CD8-positive, alpha-beta T cell (primary cell): ENCODE measurements at regions of chr17 and their contacts with region 1.

Region 1: DNA sequence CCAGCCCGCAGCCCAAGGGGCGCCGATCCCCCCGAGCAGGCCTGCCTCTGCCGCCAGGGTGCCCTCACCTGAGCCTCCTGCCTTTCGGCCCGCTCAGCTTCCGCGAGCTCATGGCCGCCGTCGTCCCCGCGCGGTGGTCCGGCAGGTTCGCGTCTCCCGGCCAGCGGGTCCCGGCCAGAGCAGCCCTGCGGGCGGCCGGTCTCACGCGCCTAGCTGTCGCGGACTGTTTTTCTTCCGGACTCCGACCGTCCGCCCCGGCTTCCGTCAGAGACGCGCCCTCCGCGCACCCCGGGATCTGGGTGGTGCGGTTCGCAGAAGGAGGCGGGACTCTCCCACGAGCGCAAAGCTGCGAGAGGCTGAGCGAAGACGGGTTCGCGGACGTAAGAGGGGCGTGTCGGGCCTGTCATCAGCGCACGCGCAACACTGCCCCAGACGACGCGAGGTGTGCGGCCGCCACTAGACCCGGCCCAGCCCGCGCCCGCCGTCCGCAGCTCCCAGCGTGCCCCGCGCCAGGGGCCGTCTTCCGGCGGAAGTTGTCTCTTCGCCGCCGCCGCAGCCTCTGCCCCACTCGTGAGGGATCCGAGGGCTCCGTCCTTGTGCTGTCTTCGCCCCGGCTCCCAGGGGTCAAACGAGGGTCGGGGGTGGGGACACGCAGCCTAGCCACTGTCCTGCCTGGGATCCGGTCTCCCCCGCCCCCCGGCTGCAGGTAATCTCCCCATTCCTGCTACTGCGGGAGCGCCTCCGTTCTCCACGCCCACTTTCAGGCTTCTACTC is at the start of gene INPP5K:
- DNase-seq: peak; percentile 95 to 100 (median 98)
- ATAC-seq: peak; percentile 91
- H3K4me3 ChIP-seq: peak within 1 kb of the TSS; percentile 93 to 99
- H3K4me3 Mint-ChIP-seq: peak within 1 kb of the TSS; percentile 90
- H3K27ac ChIP-seq: peak within 1 kb of the TSS; percentile 86 to 93
- H3K27ac Mint-ChIP-seq: peak within 1 kb of the TSS; percentile 91
- H3K4me1 ChIP-seq: peaks cover 20% of the 10 kb centered on the region
- H3K4me1 Mint-ChIP-seq: peaks cover 24% of the 10 kb centered on the region
- H3K27me3 ChIP-seq: no peaks in the 10 kb centered on the region
- H3K27me3 Mint-ChIP-seq: no peaks in the 10 kb centered on the region
- CTCF ChIP-seq: no peak
- total RNA-seq, gene INPP5K: 204 to 221 TPM

Region 2: GRCh38 chr17:1179818-1180742 is 336.5 kb before region 1 on chr17 and contains the start of gene ABR:
- CTCF ChIA-PET with region 1: no interaction called
- POLR2A ChIA-PET with region 1: no interaction called
- intact Hi-C with region 1: loop called in 1 of 2 experiments (anchors 2 kb)
- DNase-seq: peak; percentile 25 to 78 (median 70)
- ATAC-seq: peak; percentile 78
- H3K4me3 ChIP-seq: peak within 1 kb of the TSS; percentile 57 to 77
- H3K4me3 Mint-ChIP-seq: peak within 1 kb of the TSS; percentile 78
- H3K27ac ChIP-seq: peak within 1 kb of the TSS in 1 of 2 experiments; percentile 35
- H3K27ac Mint-ChIP-seq: peak within 1 kb of the TSS; percentile 22
- H3K4me1 ChIP-seq: peaks cover 18% of the 10 kb centered on the region
- H3K4me1 Mint-ChIP-seq: peaks cover 18% of the 10 kb centered on the region
- H3K27me3 ChIP-seq: no peaks in the 10 kb centered on the region
- H3K27me3 Mint-ChIP-seq: no peaks in the 10 kb centered on the region
- CTCF ChIP-seq: no peak
- total RNA-seq, gene ABR: 46.4 to 48.7 TPM

Region 3: DNA sequence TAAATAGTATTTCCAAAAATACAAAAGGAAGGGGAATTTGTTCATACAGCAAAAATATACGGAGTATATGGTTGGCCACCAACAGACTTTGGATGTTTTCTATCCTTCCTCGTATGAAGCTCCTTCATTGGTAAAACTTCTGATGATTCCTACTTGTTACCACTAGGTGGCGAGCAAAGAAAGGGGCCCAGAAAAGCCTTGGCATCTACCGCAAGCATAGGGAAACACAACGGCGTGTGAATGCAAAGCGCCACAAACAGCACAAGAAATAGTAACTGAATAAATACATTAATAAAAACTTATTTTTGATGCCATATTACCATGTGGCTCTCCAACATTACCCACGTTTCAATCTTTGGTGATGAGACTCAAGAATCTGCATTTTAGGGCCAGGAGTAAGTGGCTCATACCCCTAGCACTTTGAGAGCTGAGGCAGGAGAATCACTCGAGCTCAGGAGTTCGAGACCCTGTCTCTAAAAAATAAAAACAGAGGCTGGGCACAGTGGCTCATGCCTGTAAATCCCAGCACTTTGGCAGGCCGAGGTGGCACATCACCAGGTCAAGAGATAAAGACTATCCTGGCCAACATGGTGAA is 151.0 kb before region 1 on chr17:
- CTCF ChIA-PET with region 1: interaction called, 63 read pairs
- POLR2A ChIA-PET with region 1: interaction called, 23 read pairs
- intact Hi-C with region 1: loop called (anchors 1 kb)
- DNase-seq: peak; percentile 10 to 88 (median 58)
- ATAC-seq: peak; percentile 76
- H3K4me3 ChIP-seq: no peak overlapping the region
- H3K4me3 Mint-ChIP-seq: no peak overlapping the region
- H3K27ac ChIP-seq: peak overlapping the region in 1 of 2 experiments; percentile 61
- H3K27ac Mint-ChIP-seq: no peak overlapping the region
- H3K4me1 ChIP-seq: peaks cover 34% of the 10 kb centered on the region
- H3K4me1 Mint-ChIP-seq: peaks cover 62% of the 10 kb centered on the region
- H3K27me3 ChIP-seq: no peaks in the 10 kb centered on the region
- H3K27me3 Mint-ChIP-seq: no peaks in the 10 kb centered on the region
- CTCF ChIP-seq: peak; percentile 90

Region 4: GRCh38 chr17:1488030-1488863 is 28.3 kb before region 1 on chr17:
- CTCF ChIA-PET with region 1: interaction called, 6 read pairs
- POLR2A ChIA-PET with region 1: interaction called, 16 read pairs
- intact Hi-C with region 1: loop called (anchors 1 kb)
- DNase-seq: peak in 8 of 9 experiments; percentile 62 to 87 (median 77)
- ATAC-seq: peak; percentile 42
- H3K4me3 ChIP-seq: peak overlapping the region; percentile 53 to 63
- H3K4me3 Mint-ChIP-seq: peak overlapping the region; percentile 86
- H3K27ac ChIP-seq: no peak overlapping the region
- H3K27ac Mint-ChIP-seq: peak overlapping the region; percentile 52
- H3K4me1 ChIP-seq: peaks cover 38% of the 10 kb centered on the region
- H3K4me1 Mint-ChIP-seq: peaks cover 27% of the 10 kb centered on the region
- H3K27me3 ChIP-seq: peaks cover 0 to 3% of the 10 kb centered on the region in 2 experiments
- H3K27me3 Mint-ChIP-seq: no peaks in the 10 kb centered on the region
- CTCF ChIP-seq: no peak

Region 5: DNA sequence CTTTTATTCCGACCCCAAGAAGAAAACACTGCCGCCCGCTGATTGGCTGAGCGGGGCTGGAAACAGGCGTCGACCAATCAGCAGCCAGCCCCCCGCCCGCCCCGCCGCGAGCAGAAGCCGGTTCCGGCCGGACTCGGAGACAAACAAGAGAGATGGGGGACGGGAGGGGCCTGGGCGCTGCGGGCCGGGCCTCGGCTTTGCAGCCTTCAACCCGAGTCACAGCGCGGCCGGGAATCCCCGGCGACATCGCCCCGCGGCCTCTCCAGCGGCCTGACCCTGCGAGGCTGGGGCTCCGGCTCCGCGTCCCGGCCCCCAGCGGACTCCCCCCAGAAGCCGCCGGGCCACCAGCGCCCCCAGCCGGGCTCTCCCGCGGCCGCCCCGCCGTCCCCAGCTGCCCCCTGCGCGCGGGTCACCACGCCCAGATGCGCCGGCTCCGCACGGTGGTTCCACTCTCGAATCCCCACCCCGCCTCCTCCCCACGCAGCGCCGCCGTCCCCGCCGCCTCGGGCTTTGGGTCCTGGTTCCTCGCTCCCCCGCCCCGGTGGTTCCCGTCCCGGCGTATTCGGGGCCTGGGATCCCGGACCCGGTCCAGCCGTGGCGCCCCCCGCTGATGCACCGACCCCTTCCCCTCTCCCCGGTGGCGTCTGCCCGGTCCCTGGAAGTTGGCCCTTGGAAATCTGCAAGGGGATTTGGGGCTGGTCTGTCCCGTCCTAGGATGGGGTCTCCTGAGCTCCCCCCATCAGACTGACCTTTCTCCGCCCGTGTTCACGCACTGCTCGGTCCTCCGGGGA is 112.5 kb after region 1 on chr17:
- CTCF ChIA-PET with region 1: interaction called, 4 read pairs
- POLR2A ChIA-PET with region 1: interaction called, 13 read pairs
- intact Hi-C with region 1: loop called (anchors 1 to 2 kb)
- DNase-seq: peak; percentile 81 to 95 (median 91)
- ATAC-seq: peak; percentile 70
- H3K4me3 ChIP-seq: peak overlapping the region; percentile 70 to 90
- H3K4me3 Mint-ChIP-seq: peak overlapping the region; percentile 95
- H3K27ac ChIP-seq: peak overlapping the region; percentile 43 to 79
- H3K27ac Mint-ChIP-seq: peak overlapping the region; percentile 90
- H3K4me1 ChIP-seq: peaks cover 20% of the 10 kb centered on the region
- H3K4me1 Mint-ChIP-seq: peaks cover 19% of the 10 kb centered on the region
- H3K27me3 ChIP-seq: no peaks in the 10 kb centered on the region
- H3K27me3 Mint-ChIP-seq: no peaks in the 10 kb centered on the region
- CTCF ChIP-seq: no peak

Region 6: GRCh38 chr17:1724506-1725362 is 208.2 kb after region 1 on chr17 and contains the start of gene WDR81:
- CTCF ChIA-PET with region 1: no interaction called
- POLR2A ChIA-PET with region 1: no interaction called
- intact Hi-C with region 1: loop called in 1 of 2 experiments (anchors 1 kb)
- DNase-seq: peak; percentile 57 to 94 (median 86)
- ATAC-seq: peak; percentile 71
- H3K4me3 ChIP-seq: peak within 1 kb of the TSS; percentile 57 to 62
- H3K4me3 Mint-ChIP-seq: peak within 1 kb of the TSS; percentile 79
- H3K27ac ChIP-seq: peak within 1 kb of the TSS; percentile 57 to 75
- H3K27ac Mint-ChIP-seq: peak within 1 kb of the TSS; percentile 83
- H3K4me1 ChIP-seq: peaks cover 52% of the 10 kb centered on the region
- H3K4me1 Mint-ChIP-seq: peaks cover 39% of the 10 kb centered on the region
- H3K27me3 ChIP-seq: no peaks in the 10 kb centered on the region
- H3K27me3 Mint-ChIP-seq: no peaks in the 10 kb centered on the region
- CTCF ChIP-seq: no peak
- total RNA-seq, gene WDR81: 18.9 to 20.4 TPM